ENCODE measurements at regions of chr21 and their contacts with region 1.

Region 1: GRCh38 chr21:37563641-37564340 is 197.2 kb downstream of the DYRK1A start:
- DNase-seq: peak; percentile 94
- H3K4me3 Mint-ChIP-seq: peak overlapping the region; percentile 93
- H3K27ac Mint-ChIP-seq: peak overlapping the region; percentile 100
- H3K4me1 Mint-ChIP-seq: peaks cover 25% of the 10 kb centered on the region
- H3K27me3 Mint-ChIP-seq: no peaks in the 10 kb centered on the region

Region 2: GRCh38 chr21:37072988-37073416 is 490.8 kb before region 1 on chr21 and contains the starts of genes PIGP and TTC3:
- CTCF ChIA-PET with region 1: interaction called, 4 read pairs
- POLR2A ChIA-PET with region 1: interaction called, 7 read pairs
- intact Hi-C with region 1: loop called (anchors 5 kb)
- DNase-seq: peak; percentile 97
- H3K4me3 Mint-ChIP-seq: peak within 1 kb of the TSS; percentile 99
- H3K27ac Mint-ChIP-seq: peak within 1 kb of the TSS; percentile 89
- H3K4me1 Mint-ChIP-seq: peaks cover 50% of the 10 kb centered on the region
- H3K27me3 Mint-ChIP-seq: no peaks in the 10 kb centered on the region
- total RNA-seq, gene PIGP: 19.2 to 21.2 TPM
- total RNA-seq, gene TTC3: 63.1 to 65.6 TPM

Region 3: GRCh38 chr21:37267269-37268184 is 296.3 kb before region 1 on chr21 and contains the start of gene VPS26C:
- CTCF ChIA-PET with region 1: interaction called, 9 read pairs
- POLR2A ChIA-PET with region 1: interaction called, 10 read pairs
- intact Hi-C with region 1: loop called (anchors 1 kb)
- DNase-seq: peak; percentile 99
- H3K4me3 Mint-ChIP-seq: peak within 1 kb of the TSS; percentile 95
- H3K27ac Mint-ChIP-seq: peak within 1 kb of the TSS; percentile 99
- H3K4me1 Mint-ChIP-seq: peaks cover 39% of the 10 kb centered on the region
- H3K27me3 Mint-ChIP-seq: no peaks in the 10 kb centered on the region
- total RNA-seq, gene VPS26C: 50.3 to 57.2 TPM

Region 4: GRCh38 chr21:37463083-37463801 is 100.5 kb before region 1 on chr21:
- CTCF ChIA-PET with region 1: interaction called, 7 read pairs
- POLR2A ChIA-PET with region 1: no interaction called
- intact Hi-C with region 1: loop called (anchors 1 kb)
- DNase-seq: peak; percentile 25
- H3K4me3 Mint-ChIP-seq: no peak overlapping the region
- H3K27ac Mint-ChIP-seq: no peak overlapping the region
- H3K4me1 Mint-ChIP-seq: peaks cover 70% of the 10 kb centered on the region
- H3K27me3 Mint-ChIP-seq: no peaks in the 10 kb centered on the region

Region 5: DNA sequence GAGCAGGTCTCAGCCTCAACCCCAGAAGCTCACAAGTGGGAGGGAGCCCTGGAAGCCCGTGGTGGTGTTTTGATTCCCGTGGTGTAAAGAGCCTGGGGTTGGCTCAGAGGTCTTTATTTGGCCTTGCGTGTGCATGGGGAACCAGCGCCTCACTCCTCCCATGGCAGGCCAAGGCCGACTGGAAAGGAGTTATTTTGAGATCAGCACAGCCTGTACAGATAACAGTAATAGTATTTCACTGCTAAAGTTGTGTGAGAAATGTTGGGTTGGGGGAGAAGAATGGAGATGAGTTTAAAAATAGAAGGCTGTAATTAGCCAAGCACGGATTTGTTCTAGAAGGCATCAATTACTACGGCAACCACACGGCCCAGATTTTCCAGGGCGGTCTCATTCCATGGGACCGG is 10.7 kb before region 1 on chr21:
- CTCF ChIA-PET with region 1: interaction called, 10 read pairs
- POLR2A ChIA-PET with region 1: interaction called, 3 read pairs
- intact Hi-C with region 1: no loop called
- DNase-seq: no peak
- H3K4me3 Mint-ChIP-seq: no peak overlapping the region
- H3K27ac Mint-ChIP-seq: no peak overlapping the region
- H3K4me1 Mint-ChIP-seq: no peaks in the 10 kb centered on the region
- H3K27me3 Mint-ChIP-seq: peaks cover 6% of the 10 kb centered on the region

Region 6: GRCh38 chr21:37642493-37642892 is 78.7 kb after region 1 on chr21:
- CTCF ChIA-PET with region 1: interaction called, 6 read pairs
- POLR2A ChIA-PET with region 1: no interaction called
- intact Hi-C with region 1: loop called (anchors 1 kb)
- DNase-seq: peak; percentile 47
- H3K4me3 Mint-ChIP-seq: no peak overlapping the region
- H3K27ac Mint-ChIP-seq: no peak overlapping the region
- H3K4me1 Mint-ChIP-seq: no peaks in the 10 kb centered on the region
- H3K27me3 Mint-ChIP-seq: peaks cover 22% of the 10 kb centered on the region

Measured in activated CD4-positive, alpha-beta memory T cell treated with anti-CD3 and anti-CD28 coated beads for 36 hours (primary cell).